Dorsolateral prefrontal cortex (tissue), 120 donors: ENCODE measurements at regions of chr22 and their contacts with region 1.

Region 1: DNA sequence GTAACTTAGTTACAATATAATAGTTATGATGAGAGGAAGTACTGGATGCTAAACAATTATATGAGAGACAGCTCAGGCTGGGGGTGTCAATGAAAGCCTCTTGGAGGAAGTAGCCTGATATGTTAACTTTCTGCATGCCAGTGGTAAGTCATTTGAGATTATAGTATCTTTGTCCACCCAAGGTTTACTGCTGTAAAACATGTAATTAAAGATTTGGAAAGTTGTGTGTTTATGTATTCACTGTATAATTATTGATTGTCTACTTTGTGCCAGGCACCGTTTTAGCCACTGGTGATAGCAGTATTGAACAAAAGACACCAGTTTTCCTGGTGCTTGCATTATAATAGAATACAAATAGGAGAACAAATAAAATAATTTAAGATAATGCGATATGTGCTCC is 624 bp upstream of the DNAJB7 start:
- DNase-seq: no peak
- H3K4me3 ChIP-seq: no peak overlapping the region
- H3K27ac ChIP-seq: peak overlapping the region in 2 of 59 donors; percentile 11 to 30
- H3K27me3 ChIP-seq: no peaks in the 10 kb centered on the region
- CTCF ChIP-seq: no peak

Region 2: GRCh38 chr22:40764763-40765441 is 97.6 kb before region 1 on chr22:
- intact Hi-C with region 1: no loop called
- DNase-seq: no peak
- H3K4me3 ChIP-seq: no peak overlapping the region
- H3K27ac ChIP-seq: no peak overlapping the region
- H3K27me3 ChIP-seq: no peaks in the 10 kb centered on the region
- CTCF ChIP-seq: no peak

Region 3: GRCh38 chr22:40808018-40808841 is 54.3 kb before region 1 on chr22:
- intact Hi-C with region 1: no loop called
- DNase-seq: no peak
- H3K4me3 ChIP-seq: no peak overlapping the region
- H3K27ac ChIP-seq: no peak overlapping the region
- H3K27me3 ChIP-seq: no peaks in the 10 kb centered on the region
- CTCF ChIP-seq: no peak

Region 4: DNA sequence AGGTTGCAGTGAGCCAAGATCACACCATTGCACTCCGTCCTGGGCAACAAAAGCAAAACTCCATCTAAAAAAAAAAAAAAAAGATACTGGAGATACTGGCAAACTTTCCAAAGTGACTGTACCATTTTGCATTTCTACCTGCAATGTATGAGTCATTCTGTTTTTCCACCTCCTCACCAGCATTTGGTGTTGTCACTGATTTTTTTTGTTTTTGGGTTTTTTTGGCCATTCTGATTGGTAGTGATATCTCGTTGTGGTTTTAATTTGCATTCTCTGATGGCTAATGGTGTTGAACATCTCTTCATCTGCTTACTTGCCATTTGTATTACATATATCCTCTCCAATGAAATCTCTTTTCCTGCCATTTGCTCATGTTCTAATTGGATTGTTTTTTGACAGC is 76.7 kb after region 1 on chr22:
- intact Hi-C with region 1: loop called in 1 of 2 experiments (anchors 5 kb)
- DNase-seq: no peak
- H3K4me3 ChIP-seq: no peak overlapping the region
- H3K27ac ChIP-seq: no peak overlapping the region
- H3K27me3 ChIP-seq: no peaks in the 10 kb centered on the region
- CTCF ChIP-seq: no peak

Region 5: DNA sequence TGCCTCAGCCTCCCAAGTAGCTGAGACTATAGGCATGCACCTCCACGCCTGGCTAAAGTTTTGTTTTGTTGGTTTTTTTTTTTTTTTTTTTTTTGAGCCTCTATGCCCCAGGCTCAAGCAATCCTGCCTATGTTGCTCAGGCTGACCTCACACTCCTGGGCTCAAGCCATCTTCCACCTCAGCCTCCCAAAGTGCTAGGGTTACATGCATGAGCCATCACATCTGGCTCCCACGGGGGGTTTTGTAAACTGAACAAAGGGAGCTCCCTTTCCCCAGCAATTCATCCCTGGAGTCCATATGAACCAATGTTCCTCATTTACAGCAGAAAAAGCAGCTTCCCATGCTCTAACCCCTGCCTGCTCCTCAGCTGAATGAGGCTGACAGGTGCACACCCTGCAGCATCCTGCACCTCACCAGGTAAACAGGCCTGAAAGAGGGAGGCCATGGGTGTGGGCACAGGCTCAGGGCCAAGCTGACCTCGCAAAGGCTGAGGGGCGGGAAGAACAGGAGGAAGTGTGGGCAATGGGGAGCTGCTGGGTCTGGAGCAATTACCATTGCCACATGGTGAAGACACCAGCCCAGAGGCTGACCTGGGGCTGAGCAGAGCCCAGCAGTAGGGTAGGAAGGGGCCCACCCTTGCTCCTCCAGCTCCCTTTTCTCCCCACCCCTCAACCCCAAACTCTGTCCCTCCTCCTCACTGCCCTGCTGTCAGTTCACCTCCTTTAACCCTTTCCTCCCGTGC is 146.8 kb after region 1 on chr22:
- intact Hi-C with region 1: no loop called
- DNase-seq: no peak
- H3K4me3 ChIP-seq: no peak overlapping the region
- H3K27ac ChIP-seq: no peak overlapping the region
- H3K27me3 ChIP-seq: no peaks in the 10 kb centered on the region
- CTCF ChIP-seq: no peak

Region 6: DNA sequence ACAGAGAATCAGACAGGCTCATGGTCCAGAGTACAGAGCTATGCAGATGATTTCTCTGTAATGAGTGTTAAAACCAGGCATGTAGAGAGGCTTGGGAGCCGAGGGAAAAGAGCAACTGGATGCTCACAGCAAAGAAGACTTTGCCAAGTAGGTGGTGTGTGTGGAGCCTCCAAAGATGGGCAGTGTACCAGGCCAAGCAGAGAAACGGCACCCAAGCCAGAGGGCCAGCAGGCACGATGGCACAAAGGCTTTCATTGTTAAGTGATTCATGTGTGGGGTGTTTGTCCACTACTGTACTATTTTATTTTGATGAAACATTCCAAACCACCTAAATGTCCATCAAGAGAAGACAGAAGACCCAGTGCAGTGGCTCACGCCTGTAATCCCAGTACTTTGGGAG is 412.3 kb after region 1 on chr22:
- intact Hi-C with region 1: no loop called
- DNase-seq: peak in 9 of 10 donors; percentile 48 to 84 (median 71)
- H3K4me3 ChIP-seq: peak overlapping the region in 4 of 59 donors; percentile 2 to 24 (median 6)
- H3K27ac ChIP-seq: peak overlapping the region; percentile 46 to 98 (median 89)
- H3K27me3 ChIP-seq: no peaks in the 10 kb centered on the region
- CTCF ChIP-seq: peak in 2 of 56 donors; percentile 10